HepG2 (cell line): ENCODE measurements at regions of chr9 and their contacts with region 1.

Region 1: GRCh38 chr9:82961504-82962125 is 101.3 kb downstream of the RASEF start:
- DNase-seq: peak; percentile 73
- ATAC-seq: peak; percentile 97
- H3K4me3 ChIP-seq: no peak overlapping the region
- H3K27ac ChIP-seq: no peak overlapping the region
- H3K4me1 ChIP-seq: no peaks in the 10 kb centered on the region
- H3K27me3 ChIP-seq: no peaks in the 10 kb centered on the region
- CTCF ChIP-seq: peak; percentile 91
- EP300 ChIP-seq: no peak
- POLR2A ChIP-seq: no peak
- RAD21 ChIP-seq: peak; percentile 69; the same call in 1 of the 2 replicates

Region 2: GRCh38 chr9:81724242-81724889 is 1237.2 kb before region 1 on chr9:
- CTCF ChIA-PET with region 1: no interaction called
- POLR2A ChIA-PET with region 1: no interaction called
- in situ Hi-C with region 1: loop called (anchors 25 kb)
- intact Hi-C with region 1: no loop called
- DNase-seq: no peak
- ATAC-seq: no peak
- H3K4me3 ChIP-seq: no peak overlapping the region
- H3K27ac ChIP-seq: no peak overlapping the region
- H3K4me1 ChIP-seq: no peaks in the 10 kb centered on the region; the same call in 1 of the 2 replicates
- H3K27me3 ChIP-seq: peaks cover 0 to 1% of the 10 kb centered on the region in 2 experiments; a peak in 1 of 5 replicates
- CTCF ChIP-seq: no peak
- EP300 ChIP-seq: no peak
- POLR2A ChIP-seq: no peak
- RAD21 ChIP-seq: no peak

Region 3: GRCh38 chr9:82532504-82533180 is 429.0 kb before region 1 on chr9:
- CTCF ChIA-PET with region 1: no interaction called
- POLR2A ChIA-PET with region 1: no interaction called
- in situ Hi-C with region 1: loop called (anchors 10 kb)
- intact Hi-C with region 1: loop called (anchors 1 kb)
- DNase-seq: peak; percentile 13
- ATAC-seq: peak; percentile 46; the same call in 2 of the 3 replicates
- H3K4me3 ChIP-seq: no peak overlapping the region
- H3K27ac ChIP-seq: no peak overlapping the region
- H3K4me1 ChIP-seq: peaks cover 6% of the 10 kb centered on the region; the same call in 1 of the 2 replicates
- H3K27me3 ChIP-seq: no peaks in the 10 kb centered on the region
- CTCF ChIP-seq: peak; percentile 57
- EP300 ChIP-seq: no peak
- POLR2A ChIP-seq: no peak
- RAD21 ChIP-seq: no peak

Region 4: GRCh38 chr9:82553654-82554366 is 407.8 kb before region 1 on chr9:
- CTCF ChIA-PET with region 1: no interaction called
- POLR2A ChIA-PET with region 1: no interaction called
- in situ Hi-C with region 1: no loop called
- intact Hi-C with region 1: loop called (anchors 5 kb)
- DNase-seq: no peak
- ATAC-seq: no peak
- H3K4me3 ChIP-seq: no peak overlapping the region
- H3K27ac ChIP-seq: no peak overlapping the region
- H3K4me1 ChIP-seq: peaks cover 43% of the 10 kb centered on the region
- H3K27me3 ChIP-seq: no peaks in the 10 kb centered on the region
- CTCF ChIP-seq: no peak
- EP300 ChIP-seq: no peak
- POLR2A ChIP-seq: no peak
- RAD21 ChIP-seq: no peak

Region 5: GRCh38 chr9:82991671-82992070 is 30.1 kb after region 1 on chr9:
- CTCF ChIA-PET with region 1: no interaction called
- POLR2A ChIA-PET with region 1: no interaction called
- in situ Hi-C with region 1: no loop called
- intact Hi-C with region 1: no loop called
- DNase-seq: peak; percentile 77
- ATAC-seq: peak; percentile 94
- H3K4me3 ChIP-seq: no peak overlapping the region
- H3K27ac ChIP-seq: no peak overlapping the region
- H3K4me1 ChIP-seq: peaks cover 19% of the 10 kb centered on the region
- H3K27me3 ChIP-seq: peaks cover 0 to 2% of the 10 kb centered on the region in 2 experiments; a peak in 1 of 5 replicates
- CTCF ChIP-seq: no peak
- EP300 ChIP-seq: peak in 1 of 2 experiments; percentile 20; a peak in 1 of 4 replicates
- POLR2A ChIP-seq: no peak
- RAD21 ChIP-seq: no peak

Region 6: DNA sequence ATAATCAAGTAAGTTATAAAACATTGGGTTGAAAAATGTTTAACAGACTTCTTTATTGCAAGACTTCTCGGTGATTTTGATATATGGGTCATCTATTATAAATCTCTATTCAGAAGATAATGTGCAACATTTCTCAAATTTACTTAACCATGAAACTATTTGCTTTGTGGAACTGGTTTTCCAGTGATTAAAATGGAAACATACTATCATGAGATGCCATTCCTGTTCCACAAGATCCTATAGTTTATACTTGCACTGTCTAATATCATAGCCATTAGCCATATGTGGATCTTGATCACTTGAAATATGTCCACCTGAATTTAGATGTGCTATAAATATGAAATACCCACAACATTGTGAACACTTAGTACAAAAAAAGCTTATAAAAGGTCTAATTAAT is 132.3 kb after region 1 on chr9:
- CTCF ChIA-PET with region 1: no interaction called
- POLR2A ChIA-PET with region 1: no interaction called
- in situ Hi-C with region 1: no loop called
- intact Hi-C with region 1: no loop called
- DNase-seq: no peak
- ATAC-seq: no peak
- H3K4me3 ChIP-seq: no peak overlapping the region
- H3K27ac ChIP-seq: no peak overlapping the region
- H3K4me1 ChIP-seq: no peaks in the 10 kb centered on the region
- H3K27me3 ChIP-seq: no peaks in the 10 kb centered on the region
- CTCF ChIP-seq: no peak
- EP300 ChIP-seq: no peak
- POLR2A ChIP-seq: no peak
- RAD21 ChIP-seq: no peak